ENCODE measurements at regions of chr1 and their contacts with region 1.

Region 1: DNA sequence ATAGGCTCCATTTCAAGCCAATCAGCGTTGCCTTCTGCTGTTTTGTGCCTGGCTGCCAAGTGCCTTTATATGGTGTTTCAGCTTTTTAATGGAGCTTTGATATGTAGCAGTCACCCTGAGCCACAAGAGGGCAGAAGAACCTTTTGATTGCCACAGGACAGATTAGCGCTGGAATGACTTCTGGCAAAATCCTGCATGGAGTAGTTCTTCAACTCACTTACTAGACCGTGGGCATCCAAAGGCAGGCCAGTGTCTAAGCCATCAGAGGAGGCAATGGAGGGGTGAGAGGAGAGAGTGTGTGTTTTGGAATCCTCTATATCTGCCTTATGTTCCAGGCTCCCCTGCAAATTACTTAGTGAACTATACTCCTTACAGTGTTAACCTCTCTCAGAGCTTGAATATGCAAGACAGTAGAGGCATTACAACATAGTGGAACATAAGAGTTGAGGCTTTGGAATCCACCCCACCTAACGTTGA is 56.2 kb downstream of the ST3GAL3 start:
- DNase-seq: peak in 4 of 5 donors; percentile 67 to 74 (median 70)
- ATAC-seq: peak; percentile 85 to 97 (median 94)
- H3K4me3 ChIP-seq: no peak overlapping the region
- H3K27ac ChIP-seq: no peak overlapping the region
- H3K4me1 ChIP-seq: peaks cover 0 to 16% (median 7%) of the 10 kb centered on the region in 12 donors
- H3K27me3 ChIP-seq: no peaks in the 10 kb centered on the region
- CTCF ChIP-seq: peak; percentile 67 to 91 (median 82)
- POLR2A ChIP-seq: no peak

Region 2: DNA sequence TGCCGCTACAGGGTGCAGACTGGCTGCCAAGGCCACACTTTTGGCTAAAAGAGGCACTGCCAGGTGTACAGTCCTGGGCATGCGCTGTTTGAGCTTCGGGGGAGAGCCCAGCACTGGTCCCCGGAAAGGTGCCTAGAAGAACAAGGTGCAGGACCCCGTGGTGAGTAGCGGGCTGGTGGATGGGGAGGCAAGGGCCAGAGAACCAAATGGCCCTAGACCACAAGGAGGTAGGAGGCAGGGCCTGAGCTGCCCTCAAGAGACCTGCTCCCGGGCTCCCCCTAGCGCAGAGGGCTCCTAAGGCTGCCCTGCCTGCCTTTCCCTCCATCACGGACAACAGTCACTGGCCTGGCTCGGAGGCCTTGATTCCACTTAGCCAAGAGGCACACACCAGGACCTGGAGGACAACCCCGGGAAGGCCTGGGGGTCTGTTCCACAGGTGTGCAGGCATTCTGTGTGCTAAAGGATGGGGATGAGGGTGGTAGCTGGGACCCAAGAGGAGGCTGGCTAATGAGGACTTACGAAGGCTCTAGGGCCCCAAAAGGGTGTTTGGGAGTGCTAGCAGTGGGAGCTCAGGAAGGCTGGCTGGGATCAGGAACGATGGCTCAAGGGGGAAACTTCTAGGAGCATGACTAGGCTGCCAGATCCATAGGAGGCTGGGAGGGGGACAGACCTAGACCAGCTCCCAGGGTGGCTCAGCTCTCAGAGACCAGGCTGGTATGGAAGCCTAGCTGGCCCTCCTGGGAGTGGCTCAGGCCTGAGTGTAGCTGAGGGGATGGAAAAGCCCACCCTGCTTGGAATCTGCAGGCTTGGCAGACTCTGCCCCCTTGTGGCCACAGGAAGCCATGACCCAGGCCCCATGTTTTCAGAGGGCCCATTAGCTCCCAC is 170.8 kb after region 1 on chr1:
- intact Hi-C with region 1: loop called (anchors 1 to 2 kb)
- DNase-seq: peak; percentile 52 to 82 (median 60)
- ATAC-seq: peak in 3 of 4 donors; percentile 51 to 73 (median 66)
- H3K4me3 ChIP-seq: peak overlapping the region in 6 of 12 donors; percentile 33 to 46 (median 41)
- H3K27ac ChIP-seq: no peak overlapping the region
- H3K4me1 ChIP-seq: peaks cover 3 to 32% (median 19%) of the 10 kb centered on the region in 12 donors
- H3K27me3 ChIP-seq: peaks cover 3 to 23% (median 9%) of the 10 kb centered on the region in 9 donors
- CTCF ChIP-seq: peak; percentile 77 to 88 (median 80)
- POLR2A ChIP-seq: no peak

Region 3: DNA sequence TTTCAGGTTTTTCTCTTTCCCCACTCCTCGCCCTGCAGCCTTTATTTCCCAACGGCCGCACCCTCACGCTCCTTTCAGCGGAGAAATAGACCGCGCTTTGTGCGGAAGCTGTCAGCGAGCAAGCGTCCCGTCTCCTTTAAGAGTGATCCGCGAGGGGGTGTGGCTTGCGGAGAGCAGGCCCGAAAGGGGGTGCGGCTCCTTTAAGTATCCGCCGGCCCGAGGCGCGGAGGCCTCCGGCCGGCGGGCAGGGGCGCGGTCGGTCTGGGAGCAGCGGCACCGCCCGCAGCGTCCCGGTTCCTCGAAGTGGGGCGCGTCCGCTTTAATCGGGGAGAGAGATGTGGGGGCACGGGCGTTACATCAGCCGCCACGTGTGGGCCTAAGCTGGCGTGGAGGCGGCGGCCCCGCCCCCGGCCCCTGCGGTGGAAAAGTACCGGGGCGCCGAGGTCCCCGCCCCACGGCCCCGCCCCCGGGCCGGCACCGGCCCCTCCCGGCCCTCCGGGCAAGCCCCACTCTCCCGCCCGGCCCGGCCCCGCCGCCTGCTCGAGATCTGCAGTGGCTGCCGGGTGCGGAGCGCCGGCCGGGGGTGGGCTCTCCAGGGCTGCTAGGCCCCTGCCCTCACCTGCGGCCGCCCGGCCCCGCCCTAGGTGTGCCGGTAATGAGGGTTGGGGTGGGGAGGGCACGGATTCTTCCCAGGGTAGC is 266.5 kb after region 1 on chr1:
- intact Hi-C with region 1: loop called in 5 of 10 experiments (anchors 5 to 10 kb)
- DNase-seq: peak; percentile 87 to 93 (median 92)
- ATAC-seq: peak; percentile 81 to 93 (median 89)
- H3K4me3 ChIP-seq: peak overlapping the region; percentile 57 to 93 (median 80)
- H3K27ac ChIP-seq: peak overlapping the region in 11 of 12 donors; percentile 50 to 89 (median 81)
- H3K4me1 ChIP-seq: peaks cover 0 to 29% (median 17%) of the 10 kb centered on the region in 12 donors
- H3K27me3 ChIP-seq: peaks cover 0 to 2% (median 0%) of the 10 kb centered on the region in 9 donors
- CTCF ChIP-seq: peak in 1 of 12 donors; percentile 4
- POLR2A ChIP-seq: peak in 1 of 2 donors; percentile 50

Region 4: GRCh38 chr1:44036409-44037139 is 273.0 kb after region 1 on chr1:
- intact Hi-C with region 1: loop called in 6 of 10 experiments (anchors 2 to 10 kb)
- DNase-seq: peak in 4 of 5 donors; percentile 49 to 68 (median 57)
- ATAC-seq: peak; percentile 40 to 77 (median 66)
- H3K4me3 ChIP-seq: no peak overlapping the region
- H3K27ac ChIP-seq: peak overlapping the region in 9 of 12 donors; percentile 30 to 88 (median 61)
- H3K4me1 ChIP-seq: peaks cover 3 to 33% (median 20%) of the 10 kb centered on the region in 12 donors
- H3K27me3 ChIP-seq: no peaks in the 10 kb centered on the region
- CTCF ChIP-seq: peak; percentile 64 to 85 (median 74)
- POLR2A ChIP-seq: no peak

Region 5: GRCh38 chr1:44049839-44050238 is 286.3 kb after region 1 on chr1:
- intact Hi-C with region 1: loop called in 4 of 10 experiments (anchors 5 kb)
- DNase-seq: no peak
- ATAC-seq: no peak
- H3K4me3 ChIP-seq: no peak overlapping the region
- H3K27ac ChIP-seq: peak overlapping the region in 1 of 12 donors; percentile 54
- H3K4me1 ChIP-seq: peaks cover 0 to 33% (median 0%) of the 10 kb centered on the region in 12 donors
- H3K27me3 ChIP-seq: no peaks in the 10 kb centered on the region
- CTCF ChIP-seq: no peak
- POLR2A ChIP-seq: no peak

Measured in heart left ventricle (tissue), 16 donors.